ENCODE measurements at regions of chr1 and their contacts with region 1.

Region 1: DNA sequence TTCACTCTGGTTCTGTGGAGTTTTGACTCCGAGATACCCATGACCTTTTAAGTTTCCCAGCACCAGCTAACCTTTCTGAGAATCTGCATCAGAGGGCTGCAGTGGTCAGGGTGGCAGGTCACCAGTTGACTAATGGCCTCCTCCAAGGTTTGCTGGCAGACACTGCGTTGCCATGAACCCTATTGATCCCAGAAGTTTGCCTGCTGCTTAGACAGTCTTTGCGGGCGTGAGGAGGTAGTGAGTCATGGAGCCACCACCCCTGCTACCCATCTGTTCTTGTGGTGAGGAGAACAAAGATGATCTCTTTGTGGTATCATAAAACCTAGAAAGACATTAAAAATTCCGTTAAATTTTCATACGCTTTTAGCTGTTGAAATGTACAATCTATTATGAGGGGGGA is 180.4 kb downstream of the FGGY start:
- DNase-seq: peak; percentile 79
- H3K4me3 Mint-ChIP-seq: peak overlapping the region; percentile 32
- H3K27ac Mint-ChIP-seq: peak overlapping the region; percentile 75
- H3K4me1 Mint-ChIP-seq: peaks cover 19% of the 10 kb centered on the region
- H3K27me3 Mint-ChIP-seq: no peaks in the 10 kb centered on the region

Region 2: DNA sequence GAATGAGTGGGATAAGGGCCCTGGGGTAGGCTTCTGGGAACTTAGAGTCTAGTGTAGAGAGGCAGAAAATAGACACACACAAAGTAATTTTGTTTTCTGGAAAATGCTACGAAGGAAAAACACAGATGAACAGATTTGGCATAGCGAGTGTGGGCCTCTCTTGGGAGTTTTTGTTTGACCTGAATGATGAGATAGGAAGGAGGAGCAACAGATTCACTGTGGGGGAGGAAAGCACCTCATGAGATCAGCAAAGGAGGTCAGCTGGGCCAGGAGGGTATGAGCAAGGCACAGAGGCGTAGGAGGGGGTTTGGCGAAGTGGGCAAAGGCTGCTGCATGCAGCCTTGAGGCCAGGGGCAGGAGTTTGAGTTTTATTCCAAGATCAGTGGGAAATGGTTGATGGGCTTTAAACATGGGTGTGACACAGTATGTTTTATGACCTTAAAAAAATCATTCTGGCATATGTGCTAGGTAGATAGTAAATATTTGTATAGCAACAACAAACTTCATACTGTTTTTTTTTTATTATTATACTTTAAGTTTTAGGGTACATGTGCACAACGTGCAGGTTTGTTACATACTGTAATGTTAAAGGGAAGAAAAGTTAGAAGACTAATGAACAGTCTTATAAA is 122.5 kb before region 1 on chr1:
- intact Hi-C with region 1: loop called (anchors 10 kb)
- DNase-seq: no peak
- H3K4me3 Mint-ChIP-seq: no peak overlapping the region
- H3K27ac Mint-ChIP-seq: peak overlapping the region; percentile 91
- H3K4me1 Mint-ChIP-seq: peaks cover 14% of the 10 kb centered on the region
- H3K27me3 Mint-ChIP-seq: no peaks in the 10 kb centered on the region

Region 3: DNA sequence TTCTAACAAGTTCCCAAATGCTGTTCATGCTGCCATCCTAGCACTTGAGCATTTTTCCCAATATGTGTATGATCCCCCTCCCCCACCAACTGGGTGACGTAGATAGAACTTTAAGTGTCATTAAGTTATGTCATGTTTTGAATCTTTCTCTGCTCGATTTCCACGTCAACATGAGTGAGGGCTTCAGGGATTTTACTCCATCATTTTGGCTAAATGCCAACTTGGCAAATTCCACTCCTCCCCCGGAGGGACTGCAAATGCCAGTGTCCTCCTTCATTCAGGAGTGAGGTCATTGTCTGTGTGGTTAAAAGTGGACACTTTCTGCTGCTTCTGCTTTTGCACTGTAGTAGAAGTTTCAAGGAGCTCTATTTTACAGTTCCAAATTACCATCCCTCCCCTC is 21.4 kb after region 1 on chr1:
- intact Hi-C with region 1: loop called (anchors 2 kb)
- DNase-seq: no peak
- H3K4me3 Mint-ChIP-seq: no peak overlapping the region
- H3K27ac Mint-ChIP-seq: no peak overlapping the region
- H3K4me1 Mint-ChIP-seq: peaks cover 6% of the 10 kb centered on the region
- H3K27me3 Mint-ChIP-seq: no peaks in the 10 kb centered on the region

Region 4: GRCh38 chr1:59619557-59619956 is 142.3 kb after region 1 on chr1:
- intact Hi-C with region 1: no loop called
- DNase-seq: no peak
- H3K4me3 Mint-ChIP-seq: no peak overlapping the region
- H3K27ac Mint-ChIP-seq: no peak overlapping the region
- H3K4me1 Mint-ChIP-seq: no peaks in the 10 kb centered on the region
- H3K27me3 Mint-ChIP-seq: no peaks in the 10 kb centered on the region